A673 (cell line): ENCODE measurements at regions of chr6 and their contacts with region 1.

Region 1: GRCh38 chr6:28776269-28777146 is 147.3 kb downstream of the TRIM27 start:
- DNase-seq: peak; percentile 49
- H3K4me3 ChIP-seq: peak overlapping the region; percentile 38
- H3K27ac ChIP-seq: no peak overlapping the region
- H3K4me1 ChIP-seq: peaks cover 3% of the 10 kb centered on the region
- H3K27me3 ChIP-seq: peaks cover 3% of the 10 kb centered on the region
- CTCF ChIP-seq: no peak

Region 2: DNA sequence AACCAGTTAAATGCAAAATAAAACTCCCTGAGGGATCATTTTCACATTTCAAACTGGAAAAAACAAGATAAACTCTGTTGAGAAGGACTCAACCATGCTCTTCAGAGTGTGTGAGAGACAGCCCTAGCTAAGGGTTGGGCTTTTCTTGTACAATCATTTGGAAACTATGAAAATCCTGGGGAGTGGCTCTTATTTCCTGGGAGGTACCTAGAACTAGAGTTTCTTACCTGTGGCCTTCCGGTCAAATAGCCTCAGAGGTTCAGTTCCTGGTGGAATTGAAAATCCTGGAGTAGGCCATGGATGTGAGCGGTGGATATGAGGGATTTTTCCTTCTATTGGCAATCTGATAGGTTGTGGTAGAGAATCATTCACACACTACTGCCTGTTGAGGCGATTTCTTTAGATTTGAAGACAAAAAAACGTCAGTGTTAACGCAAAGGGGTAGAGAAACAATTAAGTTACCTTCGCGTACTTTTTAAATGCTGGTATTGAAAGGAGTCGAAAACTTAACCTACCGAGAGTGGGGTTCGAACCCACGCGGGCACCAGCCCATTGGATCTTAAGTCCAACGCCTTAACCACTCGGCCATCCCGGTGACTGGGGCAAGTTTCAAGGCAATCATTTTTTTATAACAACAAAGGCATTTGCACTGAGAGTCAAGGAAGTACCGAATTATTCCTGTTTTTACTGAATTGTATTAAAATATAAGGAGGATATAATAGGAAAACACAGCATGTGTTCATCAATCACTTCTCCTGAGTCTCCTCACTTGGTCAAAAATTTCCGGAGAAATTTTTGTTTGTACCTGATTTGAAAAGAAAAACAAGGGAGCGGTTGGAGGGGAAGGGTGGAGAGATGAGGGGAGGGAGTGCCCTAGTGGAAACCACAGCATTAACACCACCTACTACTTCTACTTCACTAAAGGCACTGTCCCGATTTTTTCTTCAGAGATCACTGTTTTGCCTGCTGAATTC is 1055.6 kb before region 1 on chr6:
- CTCF ChIA-PET with region 1: no interaction called
- POLR2A ChIA-PET with region 1: no interaction called
- intact Hi-C with region 1: no loop called
- DNase-seq: no peak
- H3K4me3 ChIP-seq: no peak overlapping the region
- H3K27ac ChIP-seq: no peak overlapping the region
- H3K4me1 ChIP-seq: no peaks in the 10 kb centered on the region
- H3K27me3 ChIP-seq: no peaks in the 10 kb centered on the region
- CTCF ChIP-seq: no peak

Region 3: DNA sequence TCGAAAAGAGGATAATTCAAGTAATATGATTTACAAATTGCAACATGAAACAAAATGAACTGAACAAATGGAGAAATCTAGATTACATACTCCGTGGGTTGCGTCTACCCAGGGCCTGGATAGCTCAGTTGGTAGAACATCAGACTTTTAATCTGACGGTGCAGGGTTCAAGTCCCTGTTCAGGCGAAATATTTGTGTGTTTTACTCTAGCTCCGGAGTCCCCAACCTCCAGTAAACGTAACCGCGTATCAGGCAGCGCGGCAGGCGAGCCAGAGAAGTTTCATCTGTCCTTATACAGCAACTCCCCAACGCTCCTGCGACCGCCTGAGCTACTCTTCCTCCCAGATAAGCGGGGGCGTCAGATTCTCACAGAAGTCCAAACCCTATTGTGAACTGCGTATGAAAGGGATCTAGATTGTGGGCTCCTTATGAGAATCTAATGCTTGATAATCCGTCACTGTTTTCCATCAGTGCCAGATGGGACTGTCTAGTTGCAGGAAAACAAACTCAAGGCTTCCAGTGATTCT is 28.8 kb before region 1 on chr6:
- CTCF ChIA-PET with region 1: interaction called, 27 read pairs
- POLR2A ChIA-PET with region 1: no interaction called
- intact Hi-C with region 1: no loop called
- DNase-seq: peak; percentile 97
- H3K4me3 ChIP-seq: peak overlapping the region; percentile 42
- H3K27ac ChIP-seq: no peak overlapping the region
- H3K4me1 ChIP-seq: no peaks in the 10 kb centered on the region
- H3K27me3 ChIP-seq: no peaks in the 10 kb centered on the region
- CTCF ChIP-seq: no peak